ENCODE measurements at regions of chr16 and their contacts with region 1.

Region 1: GRCh38 chr16:68843482-68844210 is at the start of gene TANGO6:
- DNase-seq: peak; percentile 95
- H3K4me3 Mint-ChIP-seq: peak within 1 kb of the TSS; percentile 96
- H3K27ac Mint-ChIP-seq: peak within 1 kb of the TSS; percentile 89
- H3K4me1 Mint-ChIP-seq: peaks cover 27% of the 10 kb centered on the region
- H3K27me3 Mint-ChIP-seq: no peaks in the 10 kb centered on the region
- total RNA-seq, gene TANGO6: 21.6 to 22.3 TPM

Region 2: DNA sequence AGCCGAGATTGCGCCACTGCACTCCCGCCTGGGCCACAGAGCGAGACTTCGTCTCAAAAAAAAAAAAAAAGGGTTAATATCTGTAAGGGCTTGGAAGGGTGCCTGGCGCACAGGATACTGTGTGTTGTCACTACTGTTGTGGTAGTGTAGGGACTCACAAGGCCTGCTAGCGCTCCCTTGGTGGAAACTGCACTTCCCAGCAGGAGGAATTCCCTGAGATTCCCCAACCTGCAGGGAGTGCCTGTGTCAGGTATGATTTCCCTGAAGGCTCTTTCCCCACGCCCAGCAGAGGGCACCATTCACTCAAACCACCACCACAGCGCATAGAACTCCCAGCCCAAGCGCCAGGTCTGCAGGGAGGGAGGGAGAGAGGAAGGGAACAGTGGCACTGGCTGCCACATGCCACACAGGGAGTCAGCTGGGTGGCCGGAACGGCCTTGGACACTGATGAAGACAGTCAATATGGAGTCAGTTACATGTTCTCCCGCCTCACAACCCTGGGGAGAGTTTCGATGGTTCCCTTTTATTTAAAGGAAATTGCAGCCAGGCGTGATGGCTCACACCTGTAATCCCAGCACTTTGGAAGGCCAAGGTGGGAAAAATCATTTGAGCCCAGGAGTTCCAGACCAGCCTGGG is 139.3 kb before region 1 on chr16:
- CTCF ChIA-PET with region 1: no interaction called
- intact Hi-C with region 1: loop called (anchors 2 kb)
- DNase-seq: peak; percentile 85
- H3K4me3 Mint-ChIP-seq: no peak overlapping the region
- H3K27ac Mint-ChIP-seq: no peak overlapping the region
- H3K4me1 Mint-ChIP-seq: peaks cover 3% of the 10 kb centered on the region
- H3K27me3 Mint-ChIP-seq: no peaks in the 10 kb centered on the region

Region 3: GRCh38 chr16:68907297-68907696 is 63.7 kb after region 1 on chr16:
- CTCF ChIA-PET with region 1: no interaction called
- intact Hi-C with region 1: no loop called
- DNase-seq: no peak
- H3K4me3 Mint-ChIP-seq: no peak overlapping the region
- H3K27ac Mint-ChIP-seq: no peak overlapping the region
- H3K4me1 Mint-ChIP-seq: no peaks in the 10 kb centered on the region
- H3K27me3 Mint-ChIP-seq: no peaks in the 10 kb centered on the region

Region 4: GRCh38 chr16:68995011-68995504 is 151.4 kb after region 1 on chr16:
- CTCF ChIA-PET with region 1: no interaction called
- intact Hi-C with region 1: no loop called
- DNase-seq: no peak
- H3K4me3 Mint-ChIP-seq: no peak overlapping the region
- H3K27ac Mint-ChIP-seq: no peak overlapping the region
- H3K4me1 Mint-ChIP-seq: no peaks in the 10 kb centered on the region
- H3K27me3 Mint-ChIP-seq: no peaks in the 10 kb centered on the region

Region 5: GRCh38 chr16:69123910-69124309 is 280.3 kb after region 1 on chr16:
- CTCF ChIA-PET with region 1: interaction called, 9 read pairs
- intact Hi-C with region 1: loop called (anchors 1 kb)
- DNase-seq: peak; percentile 74
- H3K4me3 Mint-ChIP-seq: no peak overlapping the region
- H3K27ac Mint-ChIP-seq: no peak overlapping the region
- H3K4me1 Mint-ChIP-seq: peaks cover 18% of the 10 kb centered on the region
- H3K27me3 Mint-ChIP-seq: no peaks in the 10 kb centered on the region

Region 6: DNA sequence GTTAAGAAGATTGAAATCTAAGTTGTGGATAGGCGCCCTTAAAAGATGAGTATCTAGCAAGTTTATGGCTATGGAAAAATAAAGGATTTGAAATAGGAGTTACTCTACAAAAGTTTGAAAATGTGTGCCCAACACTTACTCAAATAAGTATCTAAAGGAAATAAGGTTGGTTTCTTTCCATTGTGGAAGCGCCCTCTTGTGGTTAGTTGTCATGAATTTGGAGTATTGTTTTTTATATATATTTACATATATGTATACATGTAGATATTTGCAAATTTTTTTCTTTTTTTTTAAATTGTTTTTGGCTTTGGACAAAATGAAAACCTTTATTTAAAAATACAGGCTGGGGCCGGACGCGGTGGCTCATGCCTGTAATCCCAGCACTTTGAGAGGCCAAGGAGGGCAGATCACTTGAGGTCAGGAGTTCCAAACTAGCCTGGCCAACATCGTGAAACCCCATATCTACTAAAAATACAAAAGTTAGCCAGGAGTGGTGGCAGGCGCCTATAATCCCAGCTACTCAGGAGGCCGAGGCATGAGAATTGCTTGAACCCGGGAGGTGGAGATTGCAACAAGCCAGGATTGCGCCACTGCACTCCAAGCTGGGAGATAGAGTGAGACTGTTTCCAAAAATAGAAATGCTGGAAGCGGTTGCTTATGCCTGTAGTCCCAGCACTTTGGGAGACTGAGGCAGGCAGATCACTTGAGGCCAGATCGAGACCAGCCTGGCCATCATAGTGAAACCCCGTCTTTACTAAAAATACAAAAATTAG is 443.5 kb after region 1 on chr16:
- CTCF ChIA-PET with region 1: no interaction called
- intact Hi-C with region 1: loop called (anchors 1 kb)
- DNase-seq: peak; percentile 68
- H3K4me3 Mint-ChIP-seq: no peak overlapping the region
- H3K27ac Mint-ChIP-seq: no peak overlapping the region
- H3K4me1 Mint-ChIP-seq: peaks cover 2% of the 10 kb centered on the region
- H3K27me3 Mint-ChIP-seq: no peaks in the 10 kb centered on the region